Activated CD8-positive, alpha-beta memory T cell treated with anti-CD3 and anti-CD28 coated beads, Interleukin-2, amount 10 ng/mL, durations not matched to agents 7 days and 5 days (primary cell): ENCODE measurements at regions of chr1 and their contacts with region 1.

Region 1: GRCh38 chr1:150561974-150562445 is 12.8 kb downstream of the ADAMTSL4 start:
- DNase-seq: peak; percentile 96
- ATAC-seq: peak; percentile 65
- H3K4me3 Mint-ChIP-seq: peak overlapping the region; percentile 87
- H3K27ac Mint-ChIP-seq: peak overlapping the region; percentile 100
- H3K4me1 Mint-ChIP-seq: peaks cover 56% of the 10 kb centered on the region
- H3K27me3 Mint-ChIP-seq: no peaks in the 10 kb centered on the region

Region 2: DNA sequence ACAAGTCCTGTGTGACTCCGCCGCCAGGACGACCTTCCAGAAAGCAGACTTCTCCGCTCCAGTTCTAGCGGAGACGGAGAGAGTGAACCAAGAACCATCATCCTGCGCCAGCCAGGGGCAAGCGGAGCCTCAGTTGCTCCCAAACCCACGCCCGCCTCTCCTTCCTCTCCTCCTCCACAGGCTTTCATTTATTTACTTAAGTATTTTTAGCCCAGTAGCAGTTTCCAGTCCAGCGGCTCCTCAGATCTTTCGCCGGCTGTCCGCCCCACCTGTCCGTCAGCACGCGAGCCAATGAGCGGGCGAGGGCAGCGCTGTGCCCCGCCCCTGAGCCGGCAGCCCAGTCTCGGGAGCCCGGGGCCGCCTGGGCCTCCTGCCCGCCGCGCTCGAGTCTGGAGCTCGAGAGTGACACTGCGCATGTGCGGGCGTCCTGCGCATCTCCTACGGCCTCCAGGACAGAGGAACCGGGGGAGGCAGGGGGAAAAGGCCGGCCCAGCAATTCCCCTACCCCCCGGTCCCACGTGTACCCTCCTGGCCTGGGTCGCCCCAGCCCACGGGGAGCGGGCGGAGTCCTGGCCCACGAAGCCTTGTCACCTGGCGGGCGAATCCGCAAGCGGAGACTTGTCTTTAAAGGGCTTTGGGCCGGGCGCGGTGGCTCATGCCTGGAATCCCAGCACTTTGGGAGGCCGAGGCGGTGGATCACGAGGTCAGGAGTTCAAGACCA is 46.5 kb before region 1 on chr1 and contains the start of gene FALEC:
- CTCF ChIA-PET with region 1: interaction called, 32 read pairs
- DNase-seq: peak; percentile 94
- ATAC-seq: peak; percentile 100
- H3K4me3 Mint-ChIP-seq: peak within 1 kb of the TSS; percentile 84
- H3K27ac Mint-ChIP-seq: peak within 1 kb of the TSS; percentile 64
- H3K4me1 Mint-ChIP-seq: peaks cover 17% of the 10 kb centered on the region
- H3K27me3 Mint-ChIP-seq: no peaks in the 10 kb centered on the region
- total RNA-seq, gene FALEC: 0.59 TPM in 1 of 2 experiments, not detected in the other

Region 3: GRCh38 chr1:150529017-150529416 is 33.0 kb before region 1 on chr1:
- CTCF ChIA-PET with region 1: interaction called, 11 read pairs
- DNase-seq: no peak
- ATAC-seq: no peak
- H3K4me3 Mint-ChIP-seq: no peak overlapping the region
- H3K27ac Mint-ChIP-seq: no peak overlapping the region
- H3K4me1 Mint-ChIP-seq: no peaks in the 10 kb centered on the region
- H3K27me3 Mint-ChIP-seq: no peaks in the 10 kb centered on the region

Region 4: DNA sequence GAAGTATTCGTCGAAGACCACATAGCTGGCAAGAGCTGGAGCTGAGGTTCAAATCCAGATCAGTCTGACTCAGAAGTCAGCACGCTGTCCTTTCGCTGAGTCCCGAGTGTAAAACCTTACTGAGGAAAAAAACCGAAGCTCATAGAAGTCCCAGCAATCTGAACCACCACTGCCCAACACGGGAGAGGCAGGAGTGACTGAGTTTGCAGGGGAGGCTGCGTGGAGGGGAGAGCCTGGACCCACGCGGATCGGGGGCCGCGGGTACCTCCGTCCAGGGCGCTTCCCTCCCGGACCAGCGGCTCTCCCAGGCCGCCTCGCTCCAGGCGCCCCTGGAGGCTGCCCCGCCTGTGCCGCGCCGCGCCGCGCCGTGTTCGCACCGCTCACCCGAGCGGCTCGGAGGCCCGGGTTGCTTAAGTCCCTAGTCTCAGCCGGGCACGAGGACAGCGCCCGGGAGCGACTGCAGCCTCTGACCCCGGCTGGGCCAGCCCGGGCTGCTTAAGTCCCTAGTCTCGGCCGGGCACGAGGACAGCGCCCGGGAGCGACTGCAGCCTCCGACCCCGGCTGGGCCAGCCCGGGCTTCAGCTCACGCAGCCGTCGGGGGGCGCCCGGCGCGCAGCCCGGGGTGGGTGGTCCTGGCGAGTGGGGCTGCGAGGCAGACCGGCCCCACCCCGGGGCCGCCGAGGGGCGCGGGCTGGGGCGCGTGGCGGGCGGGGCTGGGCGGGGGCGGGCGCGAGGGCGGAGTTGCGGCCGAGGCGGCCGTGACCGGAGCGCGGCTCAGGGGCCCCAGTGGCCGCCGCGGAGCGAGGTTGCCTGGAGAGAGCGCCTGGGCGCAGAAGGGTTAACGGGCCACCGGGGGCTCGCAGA is 13.1 kb before region 1 on chr1 and contains the start of gene ADAMTSL4:
- CTCF ChIA-PET with region 1: interaction called, 30 read pairs
- DNase-seq: peak; percentile 59
- ATAC-seq: peak; percentile 89
- H3K4me3 Mint-ChIP-seq: peak within 1 kb of the TSS; percentile 74
- H3K27ac Mint-ChIP-seq: no peak within 1 kb of the TSS
- H3K4me1 Mint-ChIP-seq: peaks cover 24% of the 10 kb centered on the region
- H3K27me3 Mint-ChIP-seq: peaks cover 40% of the 10 kb centered on the region
- total RNA-seq, gene ADAMTSL4: 0.18 to 0.35 TPM

Region 5: GRCh38 chr1:150578965-150579798 is 17.2 kb after region 1 on chr1 and contains the start of gene MCL1:
- CTCF ChIA-PET with region 1: interaction called, 297 read pairs
- DNase-seq: peak; percentile 95
- ATAC-seq: peak; percentile 76
- H3K4me3 Mint-ChIP-seq: peak within 1 kb of the TSS; percentile 99
- H3K27ac Mint-ChIP-seq: peak within 1 kb of the TSS; percentile 97
- H3K4me1 Mint-ChIP-seq: peaks cover 32% of the 10 kb centered on the region
- H3K27me3 Mint-ChIP-seq: no peaks in the 10 kb centered on the region
- total RNA-seq, gene MCL1: 373 to 408 TPM

Region 6: GRCh38 chr1:150596095-150596892 is 34.3 kb after region 1 on chr1:
- CTCF ChIA-PET with region 1: no interaction called
- DNase-seq: no peak
- ATAC-seq: no peak
- H3K4me3 Mint-ChIP-seq: no peak overlapping the region
- H3K27ac Mint-ChIP-seq: no peak overlapping the region
- H3K4me1 Mint-ChIP-seq: peaks cover 10% of the 10 kb centered on the region
- H3K27me3 Mint-ChIP-seq: no peaks in the 10 kb centered on the region

Region 7: DNA sequence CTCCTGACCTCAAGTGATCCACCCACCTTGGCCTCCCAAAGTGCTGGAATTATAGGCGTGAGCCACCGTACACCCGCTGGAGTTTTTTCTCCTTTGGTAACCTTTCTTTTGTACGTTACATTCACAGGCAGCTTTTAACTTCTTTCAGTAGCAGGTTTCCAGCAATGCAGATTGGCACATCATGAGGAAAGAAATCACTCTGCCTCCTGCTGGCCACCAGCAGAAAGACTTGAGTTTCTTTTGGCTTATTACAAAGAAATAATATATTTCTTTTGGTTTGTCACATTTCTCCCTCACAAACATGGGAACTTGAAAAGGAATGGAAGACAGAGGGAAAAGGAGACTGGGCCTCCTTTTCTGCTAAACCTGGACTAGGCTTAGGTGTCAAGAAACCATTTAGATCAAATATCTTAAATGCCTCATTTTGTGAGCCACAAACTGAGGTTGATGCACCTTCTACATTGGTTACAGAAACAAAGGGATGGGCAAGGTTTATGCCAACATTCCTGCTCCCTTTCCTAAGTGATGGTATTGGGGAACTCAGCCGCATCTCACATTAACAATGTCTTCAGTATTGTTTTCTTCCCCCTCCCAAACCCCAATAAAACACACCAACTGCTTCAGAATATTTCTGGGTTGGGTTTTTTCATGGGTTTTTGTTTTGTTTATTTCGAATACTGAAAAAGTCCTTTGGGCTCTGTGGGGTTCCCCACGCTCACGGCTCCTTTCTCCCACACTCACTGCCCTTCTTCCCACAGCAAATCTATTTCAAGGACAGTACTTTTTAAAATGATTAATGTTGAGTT is 59.7 kb after region 1 on chr1:
- CTCF ChIA-PET with region 1: interaction called, 297 read pairs
- DNase-seq: peak; percentile 74
- ATAC-seq: peak; percentile 50
- H3K4me3 Mint-ChIP-seq: no peak overlapping the region
- H3K27ac Mint-ChIP-seq: peak overlapping the region; percentile 52
- H3K4me1 Mint-ChIP-seq: peaks cover 73% of the 10 kb centered on the region
- H3K27me3 Mint-ChIP-seq: no peaks in the 10 kb centered on the region

Region 8: GRCh38 chr1:150629115-150629928 is 67.3 kb after region 1 on chr1 and contains the start of gene ENSA:
- CTCF ChIA-PET with region 1: interaction called, 52 read pairs
- DNase-seq: peak; percentile 99
- ATAC-seq: peak; percentile 90
- H3K4me3 Mint-ChIP-seq: no peak within 1 kb of the TSS
- H3K27ac Mint-ChIP-seq: no peak within 1 kb of the TSS
- H3K4me1 Mint-ChIP-seq: peaks cover 41% of the 10 kb centered on the region
- H3K27me3 Mint-ChIP-seq: no peaks in the 10 kb centered on the region
- total RNA-seq, gene ENSA: 202 to 252 TPM

Region 9: GRCh38 chr1:150760013-150760412 is 198.0 kb after region 1 on chr1:
- CTCF ChIA-PET with region 1: no interaction called
- DNase-seq: no peak
- ATAC-seq: no peak
- H3K4me3 Mint-ChIP-seq: no peak overlapping the region
- H3K27ac Mint-ChIP-seq: no peak overlapping the region
- H3K4me1 Mint-ChIP-seq: peaks cover 30% of the 10 kb centered on the region
- H3K27me3 Mint-ChIP-seq: no peaks in the 10 kb centered on the region